Prostate gland (tissue), 2 donors: ENCODE measurements at regions of chr5 and their contacts with region 1.

Region 1: GRCh38 chr5:173573126-173573960 is 43.1 kb downstream of the BOD1 start:
- DNase-seq: peak; percentile 64
- H3K4me3 ChIP-seq: no peak overlapping the region
- H3K27ac ChIP-seq: no peak overlapping the region
- H3K4me1 ChIP-seq: no peaks in the 10 kb centered on the region
- H3K27me3 ChIP-seq: no peaks in the 10 kb centered on the region
- CTCF ChIP-seq: peak; percentile 89 to 96 (median 92)
- POLR2A ChIP-seq: no peak

Region 2: GRCh38 chr5:173293817-173294672 is 279.3 kb before region 1 on chr5:
- intact Hi-C with region 1: loop called (anchors 5 kb)
- DNase-seq: peak; percentile 63
- H3K4me3 ChIP-seq: no peak overlapping the region
- H3K27ac ChIP-seq: no peak overlapping the region
- H3K4me1 ChIP-seq: no peaks in the 10 kb centered on the region
- H3K27me3 ChIP-seq: no peaks in the 10 kb centered on the region
- CTCF ChIP-seq: peak; percentile 64 to 93 (median 91)
- POLR2A ChIP-seq: no peak

Region 3: GRCh38 chr5:173331956-173332479 is 241.3 kb before region 1 on chr5:
- intact Hi-C with region 1: loop called (anchors 10 kb)
- DNase-seq: peak; percentile 70
- H3K4me3 ChIP-seq: no peak overlapping the region
- H3K27ac ChIP-seq: no peak overlapping the region
- H3K4me1 ChIP-seq: peaks cover 15% of the 10 kb centered on the region
- H3K27me3 ChIP-seq: peaks cover 8% of the 10 kb centered on the region
- CTCF ChIP-seq: peak; percentile 81 to 95 (median 88)
- POLR2A ChIP-seq: no peak

Region 4: GRCh38 chr5:173671121-173671949 is 98.0 kb after region 1 on chr5:
- intact Hi-C with region 1: no loop called
- DNase-seq: peak; percentile 75
- H3K4me3 ChIP-seq: no peak overlapping the region
- H3K27ac ChIP-seq: peak overlapping the region; percentile 41 to 52
- H3K4me1 ChIP-seq: no peaks in the 10 kb centered on the region
- H3K27me3 ChIP-seq: no peaks in the 10 kb centered on the region
- CTCF ChIP-seq: no peak
- POLR2A ChIP-seq: no peak

Region 5: GRCh38 chr5:173963867-173964441 is 390.6 kb after region 1 on chr5:
- intact Hi-C with region 1: no loop called
- DNase-seq: peak; percentile 64
- H3K4me3 ChIP-seq: peak overlapping the region; percentile 29 to 40
- H3K27ac ChIP-seq: peak overlapping the region; percentile 70 to 78
- H3K4me1 ChIP-seq: no peaks in the 10 kb centered on the region
- H3K27me3 ChIP-seq: no peaks in the 10 kb centered on the region
- CTCF ChIP-seq: no peak
- POLR2A ChIP-seq: peak; percentile 58